Testis (tissue), 5 donors: ENCODE measurements at regions of chr3 and their contacts with region 1.

Region 1: DNA sequence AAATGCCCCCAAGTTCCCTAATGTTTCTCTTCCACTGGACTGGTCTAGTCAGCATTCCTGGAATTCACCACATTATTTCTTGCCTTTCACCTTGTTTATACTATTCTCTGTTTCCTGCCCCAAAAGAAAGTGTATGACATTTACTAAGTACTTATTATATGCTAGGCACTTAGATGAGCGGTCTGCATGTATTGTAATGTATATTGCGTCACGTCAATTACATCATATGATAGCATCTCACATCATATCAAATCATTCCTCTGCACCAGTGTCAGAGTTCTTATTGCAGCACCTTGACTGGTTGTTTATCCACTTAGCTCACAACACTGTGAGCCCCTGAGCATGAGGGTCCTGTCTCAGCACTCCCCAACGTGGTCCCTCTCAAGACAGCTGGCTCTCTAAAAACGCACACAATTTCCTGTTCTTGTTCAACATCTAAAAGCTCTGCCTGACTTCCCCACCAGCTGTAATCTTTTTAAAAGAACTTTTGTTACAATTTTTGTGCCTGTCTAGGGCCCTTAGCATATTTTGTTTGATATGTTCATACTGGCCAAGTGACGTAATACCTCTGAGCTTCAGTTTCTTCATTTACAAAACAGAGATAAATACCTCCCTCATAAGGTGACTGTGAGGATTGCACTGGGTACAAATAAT is 58.8 kb downstream of the ARHGAP31 start:
- DNase-seq: no peak
- H3K4me3 ChIP-seq: no peak overlapping the region
- H3K27ac ChIP-seq: no peak overlapping the region
- H3K4me1 ChIP-seq: peaks cover 12% of the 10 kb centered on the region
- H3K27me3 ChIP-seq: no peaks in the 10 kb centered on the region
- CTCF ChIP-seq: peak; percentile 11 to 44 (median 16)
- POLR2A ChIP-seq: no peak

Region 2: DNA sequence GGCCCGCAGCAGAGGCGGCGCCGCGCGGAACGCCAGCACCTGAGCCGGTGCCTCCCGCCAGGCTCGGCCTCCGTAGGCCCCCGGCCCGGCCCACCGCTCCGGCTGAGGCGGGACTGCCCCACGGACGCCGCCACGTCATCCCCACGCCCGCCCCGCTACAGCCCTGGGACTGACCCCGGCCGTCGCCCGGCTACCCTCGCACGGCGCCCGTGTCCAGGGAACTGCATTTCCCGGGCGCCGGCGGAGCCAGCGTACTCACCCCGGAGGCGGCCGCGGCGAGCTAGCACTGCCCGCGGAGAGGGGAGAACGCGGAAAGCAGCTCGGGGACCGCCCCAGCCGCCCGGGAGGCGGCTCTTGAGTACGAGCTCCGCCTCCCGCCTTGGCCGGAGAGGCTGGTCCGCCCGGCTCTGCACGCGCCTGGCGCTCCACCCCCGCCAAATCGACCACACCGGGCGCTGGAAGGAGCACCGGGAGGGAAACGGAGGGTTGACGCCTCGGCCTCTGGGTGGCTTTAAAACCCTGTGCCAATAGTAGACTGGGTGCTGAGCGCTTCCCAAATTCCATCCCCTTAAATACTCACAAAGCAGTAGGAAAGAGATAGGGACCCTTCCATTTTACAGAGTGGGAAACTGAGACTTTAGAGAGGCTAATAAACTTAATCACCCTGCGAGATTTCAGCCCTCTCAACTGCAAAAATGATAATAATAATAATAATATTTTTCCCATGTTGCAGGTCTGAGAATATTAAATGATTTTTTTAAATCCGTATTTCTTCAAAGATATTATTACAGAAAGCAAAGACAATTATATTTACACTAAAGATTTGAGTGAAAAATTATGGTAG is 112.2 kb before region 1 on chr3 and contains the start of gene B4GALT4:
- intact Hi-C with region 1: no loop called
- DNase-seq: peak; percentile 91
- H3K4me3 ChIP-seq: peak within 1 kb of the TSS; percentile 90 to 94
- H3K27ac ChIP-seq: peak within 1 kb of the TSS; percentile 91 to 95
- H3K4me1 ChIP-seq: no peaks in the 10 kb centered on the region
- H3K27me3 ChIP-seq: no peaks in the 10 kb centered on the region
- CTCF ChIP-seq: no peak
- POLR2A ChIP-seq: no peak
- total RNA-seq, gene B4GALT4: 13.5 to 19.4 TPM

Region 3: GRCh38 chr3:119279101-119279554 is 73.8 kb before region 1 on chr3:
- intact Hi-C with region 1: loop called (anchors 5 kb)
- DNase-seq: no peak
- H3K4me3 ChIP-seq: no peak overlapping the region
- H3K27ac ChIP-seq: peak overlapping the region in 1 of 2 donors; percentile 14
- H3K4me1 ChIP-seq: no peaks in the 10 kb centered on the region
- H3K27me3 ChIP-seq: no peaks in the 10 kb centered on the region
- CTCF ChIP-seq: no peak
- POLR2A ChIP-seq: no peak

Region 4: DNA sequence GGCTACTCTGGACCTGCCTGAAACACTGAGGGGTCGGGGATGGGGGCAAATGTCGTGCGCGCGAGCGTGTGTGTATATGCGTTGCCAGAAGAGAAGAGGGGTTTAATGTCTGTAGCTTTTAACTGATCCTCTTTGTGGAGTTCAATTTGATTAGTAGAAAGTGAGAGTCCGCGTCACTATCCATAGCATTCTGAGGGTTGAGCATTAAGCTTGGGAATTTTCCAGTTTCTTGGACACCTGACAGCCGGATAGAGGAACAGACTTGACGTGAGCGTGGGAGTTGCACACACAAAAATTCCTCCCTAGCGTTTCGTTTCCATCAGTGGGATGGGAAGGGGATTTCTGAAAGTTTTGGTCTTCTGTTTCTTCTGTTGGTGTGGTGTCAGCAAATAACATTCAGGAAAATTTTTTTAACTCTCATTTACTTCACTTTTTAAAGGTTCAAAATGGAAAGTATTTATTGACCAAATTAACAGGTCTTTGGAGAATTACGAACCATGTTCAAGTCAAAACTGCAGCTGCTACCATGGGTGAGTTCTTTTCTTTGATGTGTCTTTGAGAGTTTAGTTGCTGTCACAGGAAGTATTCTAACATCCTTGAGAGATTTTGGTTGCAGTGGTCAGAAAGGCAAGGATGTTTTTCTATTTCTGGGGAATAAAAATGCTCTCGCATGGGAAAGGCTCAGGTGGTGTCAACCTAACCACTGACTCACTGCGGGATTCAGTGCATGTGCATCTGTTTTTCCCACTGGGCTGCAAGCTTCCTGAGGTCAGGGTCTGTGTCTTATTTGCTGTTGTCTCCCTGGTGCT is 116.6 kb after region 1 on chr3:
- intact Hi-C with region 1: no loop called
- DNase-seq: no peak
- H3K4me3 ChIP-seq: peak overlapping the region; percentile 74 to 84
- H3K27ac ChIP-seq: peak overlapping the region; percentile 71 to 75
- H3K4me1 ChIP-seq: peaks cover 13% of the 10 kb centered on the region
- H3K27me3 ChIP-seq: no peaks in the 10 kb centered on the region
- CTCF ChIP-seq: no peak
- POLR2A ChIP-seq: no peak

Region 5: DNA sequence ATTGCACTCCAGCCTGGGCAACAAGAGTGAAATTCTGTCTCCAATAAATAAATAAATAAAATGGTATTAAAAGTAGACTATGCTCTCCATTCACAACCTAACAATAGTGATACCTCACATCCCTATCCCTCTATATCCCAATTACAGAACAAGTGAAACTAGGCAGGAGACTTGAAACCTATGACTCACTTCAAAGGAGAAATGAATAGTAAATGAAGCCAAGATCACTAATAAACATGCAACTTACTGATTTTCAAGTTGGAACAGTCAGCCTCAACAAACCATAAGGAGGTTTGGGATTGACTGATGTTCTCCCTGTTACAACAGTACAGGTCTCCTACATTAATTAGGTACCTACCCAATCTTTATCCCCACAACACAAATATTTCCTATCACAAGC is 637.9 kb after region 1 on chr3:
- intact Hi-C with region 1: no loop called
- DNase-seq: no peak
- H3K4me3 ChIP-seq: no peak overlapping the region
- H3K27ac ChIP-seq: no peak overlapping the region
- H3K4me1 ChIP-seq: no peaks in the 10 kb centered on the region
- H3K27me3 ChIP-seq: no peaks in the 10 kb centered on the region
- CTCF ChIP-seq: no peak
- POLR2A ChIP-seq: no peak